B cell (primary cell): ENCODE measurements at regions of chr15 and their contacts with region 1.

Region 1: GRCh38 chr15:67080900-67081431 is 15.6 kb downstream of the SMAD3 start:
- DNase-seq: peak; percentile 96
- ATAC-seq: peak; percentile 71
- H3K4me3 ChIP-seq: peak overlapping the region in 4 of 5 experiments; percentile 18 to 63 (median 30)
- H3K4me3 Mint-ChIP-seq: peak overlapping the region; percentile 87
- H3K27ac ChIP-seq: peak overlapping the region; percentile 92 to 97
- H3K27ac Mint-ChIP-seq: peak overlapping the region; percentile 97
- H3K4me1 ChIP-seq: peaks cover 96 to 100% of the 10 kb centered on the region in 2 donors
- H3K4me1 Mint-ChIP-seq: peaks cover 97% of the 10 kb centered on the region
- H3K27me3 ChIP-seq: no peaks in the 10 kb centered on the region
- H3K27me3 Mint-ChIP-seq: no peaks in the 10 kb centered on the region
- CTCF ChIP-seq: peak; percentile 61

Region 2: DNA sequence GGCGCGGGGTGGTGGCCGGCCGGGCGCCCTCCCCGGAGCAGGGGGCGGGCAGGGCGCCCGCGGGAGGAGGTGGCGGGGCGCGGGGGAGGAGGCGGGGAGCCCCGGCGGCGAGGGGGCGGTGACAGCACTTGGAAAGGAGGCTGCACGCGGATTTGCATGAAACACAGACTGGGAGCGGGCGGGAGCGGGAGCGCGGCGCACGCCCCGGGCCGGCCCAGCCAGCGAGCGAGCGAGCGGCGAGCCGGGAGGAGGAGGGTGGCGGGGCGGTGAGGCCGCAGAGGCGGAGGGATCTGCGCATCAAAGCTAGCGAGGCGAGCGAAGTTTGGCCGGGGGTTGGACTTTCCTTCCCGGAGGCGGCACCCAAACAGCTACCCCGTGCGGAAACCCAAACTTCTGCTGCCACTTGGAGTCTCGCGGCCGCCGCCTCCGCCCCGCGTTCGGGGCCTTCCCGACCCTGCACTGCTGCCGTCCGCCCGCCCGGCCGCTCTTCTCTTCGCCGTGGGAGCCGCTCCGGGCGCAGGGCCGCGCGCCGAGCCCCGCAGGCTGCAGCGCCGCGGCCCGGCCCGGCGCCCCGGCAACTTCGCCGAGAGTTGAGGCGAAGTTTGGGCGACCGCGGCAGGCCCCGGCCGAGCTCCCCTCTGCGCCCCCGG is 15.4 kb before region 1 on chr15 and contains the start of gene SMAD3:
- CTCF ChIA-PET with region 1: interaction called, 83 read pairs
- POLR2A ChIA-PET with region 1: interaction called, 54 read pairs
- intact Hi-C with region 1: loop called (anchors 1 kb)
- DNase-seq: peak; percentile 93
- ATAC-seq: peak; percentile 74
- H3K4me3 ChIP-seq: peak within 1 kb of the TSS; percentile 42 to 99 (median 98)
- H3K4me3 Mint-ChIP-seq: peak within 1 kb of the TSS; percentile 96
- H3K27ac ChIP-seq: peak within 1 kb of the TSS; percentile 58 to 79
- H3K27ac Mint-ChIP-seq: peak within 1 kb of the TSS; percentile 92
- H3K4me1 ChIP-seq: peaks cover 33 to 51% of the 10 kb centered on the region in 2 donors
- H3K4me1 Mint-ChIP-seq: peaks cover 47% of the 10 kb centered on the region
- H3K27me3 ChIP-seq: no peaks in the 10 kb centered on the region
- H3K27me3 Mint-ChIP-seq: no peaks in the 10 kb centered on the region
- CTCF ChIP-seq: no peak
- total RNA-seq, gene SMAD3: 163 and 177 TPM in 2 replicates

Region 3: DNA sequence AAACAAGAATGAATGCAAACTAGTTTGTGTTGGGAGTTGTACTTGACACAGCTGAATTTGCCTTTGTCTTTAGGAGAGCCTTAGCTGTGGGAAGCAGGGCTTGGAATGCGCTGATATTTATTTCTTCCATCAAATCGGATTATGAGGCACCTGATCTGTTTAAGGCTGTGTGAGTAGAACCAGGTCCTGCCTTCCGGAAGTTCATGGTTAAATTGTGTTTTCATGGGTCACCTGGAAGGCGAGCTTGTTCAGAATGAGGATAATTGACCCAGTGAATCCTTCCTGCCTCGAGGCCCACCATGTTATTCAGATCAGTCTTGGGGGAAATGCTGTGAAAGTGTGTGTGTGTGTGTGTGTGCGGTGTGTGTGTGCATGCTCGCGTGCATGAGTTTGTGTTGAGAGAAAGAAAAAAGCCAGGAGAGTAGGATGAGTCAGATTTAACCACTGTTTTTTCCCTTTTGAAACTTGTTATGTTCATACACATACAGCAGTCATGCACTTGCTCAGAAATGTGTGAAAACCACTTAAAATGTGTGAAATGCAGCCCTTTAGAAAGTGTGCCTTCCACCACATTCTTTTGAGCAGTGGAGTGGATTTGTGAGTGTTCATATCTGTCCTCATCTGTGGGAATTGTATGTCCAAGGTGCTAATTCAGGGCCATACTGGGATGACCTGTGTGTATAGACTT is 21.1 kb after region 1 on chr15:
- CTCF ChIA-PET with region 1: interaction called, 109 read pairs
- POLR2A ChIA-PET with region 1: interaction called, 10 read pairs
- intact Hi-C with region 1: loop called (anchors 1 kb)
- DNase-seq: peak; percentile 50
- ATAC-seq: peak; percentile 47
- H3K4me3 ChIP-seq: peak overlapping the region in 2 of 5 experiments; percentile 21 to 55
- H3K4me3 Mint-ChIP-seq: no peak overlapping the region
- H3K27ac ChIP-seq: peak overlapping the region; percentile 97 to 98
- H3K27ac Mint-ChIP-seq: no peak overlapping the region
- H3K4me1 ChIP-seq: peaks cover 98 to 100% of the 10 kb centered on the region in 2 donors
- H3K4me1 Mint-ChIP-seq: peaks cover 29% of the 10 kb centered on the region
- H3K27me3 ChIP-seq: no peaks in the 10 kb centered on the region
- H3K27me3 Mint-ChIP-seq: no peaks in the 10 kb centered on the region
- CTCF ChIP-seq: no peak

Region 4: DNA sequence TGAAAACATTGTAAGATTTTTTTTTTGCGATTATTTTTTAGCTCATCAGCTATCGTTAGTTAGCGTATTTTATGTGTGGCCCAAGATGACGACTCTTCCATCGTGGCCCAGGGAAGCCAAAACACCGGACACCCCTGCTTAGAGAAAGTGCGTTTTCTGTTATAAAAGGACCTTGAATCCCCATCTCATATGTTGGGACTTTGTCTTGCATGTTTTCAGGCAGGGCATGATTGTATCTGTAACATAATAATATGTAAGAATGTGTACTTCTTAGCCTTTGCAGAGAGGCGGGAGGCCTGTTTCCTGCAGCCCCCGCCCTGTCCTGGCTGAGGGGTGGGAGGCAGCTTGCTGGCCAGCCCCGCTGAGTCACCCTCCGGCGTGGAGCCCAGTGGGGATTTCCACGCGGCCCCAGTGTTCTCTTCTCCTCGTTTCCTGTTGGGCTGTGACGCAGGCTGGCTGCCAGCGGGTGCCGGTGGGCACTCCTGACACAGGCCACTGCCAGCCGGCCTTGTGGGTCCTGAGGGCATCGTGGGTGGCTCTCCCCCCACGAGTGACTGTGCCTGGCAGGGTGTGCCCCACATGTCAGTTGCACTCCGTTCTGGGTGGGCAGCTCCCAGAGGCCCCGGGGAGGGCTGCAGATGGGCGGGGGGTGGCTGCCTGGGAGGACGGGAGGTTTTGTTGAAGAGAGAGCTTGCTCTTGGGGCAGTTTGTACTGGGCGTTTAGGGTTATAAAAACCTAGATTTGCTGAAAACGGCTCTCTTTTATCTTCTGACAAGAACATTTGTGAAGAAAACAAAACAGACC is 40.1 kb after region 1 on chr15:
- CTCF ChIA-PET with region 1: interaction called, 102 read pairs
- POLR2A ChIA-PET with region 1: interaction called, 30 read pairs
- intact Hi-C with region 1: loop called (anchors 1 kb)
- DNase-seq: peak; percentile 94
- ATAC-seq: peak; percentile 89
- H3K4me3 ChIP-seq: peak overlapping the region; percentile 9 to 54 (median 24)
- H3K4me3 Mint-ChIP-seq: peak overlapping the region; percentile 82
- H3K27ac ChIP-seq: peak overlapping the region; percentile 90 to 91
- H3K27ac Mint-ChIP-seq: peak overlapping the region; percentile 96
- H3K4me1 ChIP-seq: peaks cover 83 to 93% of the 10 kb centered on the region in 2 donors
- H3K4me1 Mint-ChIP-seq: peaks cover 91% of the 10 kb centered on the region
- H3K27me3 ChIP-seq: no peaks in the 10 kb centered on the region
- H3K27me3 Mint-ChIP-seq: no peaks in the 10 kb centered on the region
- CTCF ChIP-seq: no peak

Region 5: DNA sequence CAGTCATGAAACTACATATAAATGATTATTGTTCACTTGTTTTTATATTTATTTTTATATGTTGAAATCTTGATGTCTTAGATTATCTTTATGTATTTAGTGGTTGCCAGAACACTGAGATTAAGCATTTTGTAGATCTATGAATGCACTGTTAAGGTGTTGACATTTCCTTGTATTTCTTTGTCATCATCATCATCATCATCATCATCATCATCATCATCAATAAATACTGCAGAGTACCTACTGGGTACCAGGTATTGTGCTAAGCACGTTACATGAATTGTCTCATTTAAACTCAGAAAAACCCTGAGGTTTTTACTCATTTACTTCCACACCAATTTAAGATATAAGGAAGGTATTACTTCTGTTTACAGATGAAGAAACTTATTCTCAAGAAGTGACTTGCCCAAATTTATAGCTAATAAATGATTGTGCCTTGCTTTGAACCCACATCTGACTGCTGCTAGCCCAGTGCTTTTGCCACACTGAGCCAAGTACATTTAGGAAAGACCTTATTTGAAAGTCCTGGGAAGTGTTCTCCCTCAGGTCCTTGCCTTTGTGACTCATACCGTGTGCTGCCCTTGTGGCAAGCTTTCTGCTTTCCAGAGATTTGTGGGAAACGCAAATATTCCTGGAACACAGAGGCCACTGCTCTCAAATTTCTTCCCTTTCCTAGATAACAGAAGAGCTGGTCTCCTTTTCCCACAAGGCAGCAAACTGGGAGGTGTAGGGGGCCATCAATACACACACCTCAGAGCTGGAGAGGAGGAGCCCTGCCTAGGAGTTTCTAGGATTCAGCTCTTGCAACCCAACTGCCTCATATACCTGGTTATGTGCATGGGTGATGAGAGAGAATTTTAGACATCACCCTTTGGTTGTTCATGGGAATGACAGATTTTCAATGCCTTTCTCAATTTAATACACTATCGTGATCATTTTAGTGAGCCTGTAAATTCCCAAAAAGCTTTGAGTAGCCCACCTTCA is 324.5 kb after region 1 on chr15:
- CTCF ChIA-PET with region 1: no interaction called
- POLR2A ChIA-PET with region 1: no interaction called
- intact Hi-C with region 1: no loop called
- DNase-seq: no peak
- ATAC-seq: no peak
- H3K4me3 ChIP-seq: no peak overlapping the region
- H3K4me3 Mint-ChIP-seq: no peak overlapping the region
- H3K27ac ChIP-seq: no peak overlapping the region
- H3K27ac Mint-ChIP-seq: no peak overlapping the region
- H3K4me1 ChIP-seq: no peaks in the 10 kb centered on the region
- H3K4me1 Mint-ChIP-seq: no peaks in the 10 kb centered on the region
- H3K27me3 ChIP-seq: no peaks in the 10 kb centered on the region
- H3K27me3 Mint-ChIP-seq: peaks cover 9% of the 10 kb centered on the region
- CTCF ChIP-seq: no peak